ENCODE measurements at regions of chr20 and their contacts with region 1.

Region 1: GRCh38 chr20:63537525-63538203 is 488 bp upstream of the PTK6 start:
- DNase-seq: peak; percentile 97
- ATAC-seq: peak; percentile 85
- H3K4me3 ChIP-seq: peak overlapping the region in 4 of 5 experiments; percentile 55 to 67 (median 58)
- H3K4me3 Mint-ChIP-seq: peak overlapping the region; percentile 86
- H3K27ac ChIP-seq: peak overlapping the region; percentile 83 to 86
- H3K27ac Mint-ChIP-seq: peak overlapping the region; percentile 92
- H3K4me1 ChIP-seq: peaks cover 30 to 45% of the 10 kb centered on the region in 2 donors
- H3K4me1 Mint-ChIP-seq: peaks cover 34% of the 10 kb centered on the region
- H3K27me3 ChIP-seq: no peaks in the 10 kb centered on the region
- H3K27me3 Mint-ChIP-seq: no peaks in the 10 kb centered on the region
- CTCF ChIP-seq: peak; percentile 99

Region 2: DNA sequence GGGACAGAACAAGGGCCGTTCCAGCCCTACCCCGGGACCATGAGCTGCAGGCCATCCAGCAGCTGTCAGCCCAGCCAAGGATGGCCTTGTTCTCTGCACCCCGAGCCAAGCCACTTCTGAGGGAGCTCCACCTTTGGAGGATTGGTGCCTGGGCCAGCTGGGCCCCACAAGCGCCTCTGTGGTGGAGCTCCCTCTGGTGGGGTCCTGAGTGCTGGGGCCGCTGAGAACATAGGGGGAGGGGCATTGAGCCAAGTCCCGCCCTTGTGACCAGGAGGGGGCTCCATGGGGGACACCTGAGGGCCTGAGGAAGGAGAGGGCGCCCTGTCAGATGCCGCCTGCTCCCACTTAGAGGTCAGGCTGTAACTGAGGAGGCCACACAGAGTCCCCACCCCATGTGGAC is 364.9 kb before region 1 on chr20:
- CTCF ChIA-PET with region 1: no interaction called
- POLR2A ChIA-PET with region 1: no interaction called
- intact Hi-C with region 1: no loop called
- DNase-seq: no peak
- ATAC-seq: no peak
- H3K4me3 ChIP-seq: no peak overlapping the region
- H3K4me3 Mint-ChIP-seq: no peak overlapping the region
- H3K27ac ChIP-seq: no peak overlapping the region
- H3K27ac Mint-ChIP-seq: no peak overlapping the region
- H3K4me1 ChIP-seq: peaks cover 13 to 30% of the 10 kb centered on the region in 2 donors
- H3K4me1 Mint-ChIP-seq: peaks cover 7% of the 10 kb centered on the region
- H3K27me3 ChIP-seq: peaks cover 0 to 54% (median 25%) of the 10 kb centered on the region in 4 experiments
- H3K27me3 Mint-ChIP-seq: peaks cover 30% of the 10 kb centered on the region
- CTCF ChIP-seq: no peak

Region 3: GRCh38 chr20:63280929-63281545 is 256.6 kb before region 1 on chr20:
- CTCF ChIA-PET with region 1: no interaction called
- POLR2A ChIA-PET with region 1: no interaction called
- intact Hi-C with region 1: no loop called
- DNase-seq: no peak
- ATAC-seq: no peak
- H3K4me3 ChIP-seq: no peak overlapping the region
- H3K4me3 Mint-ChIP-seq: no peak overlapping the region
- H3K27ac ChIP-seq: no peak overlapping the region
- H3K27ac Mint-ChIP-seq: no peak overlapping the region
- H3K4me1 ChIP-seq: no peaks in the 10 kb centered on the region
- H3K4me1 Mint-ChIP-seq: peaks cover 1% of the 10 kb centered on the region
- H3K27me3 ChIP-seq: no peaks in the 10 kb centered on the region
- H3K27me3 Mint-ChIP-seq: no peaks in the 10 kb centered on the region
- CTCF ChIP-seq: no peak

Region 4: DNA sequence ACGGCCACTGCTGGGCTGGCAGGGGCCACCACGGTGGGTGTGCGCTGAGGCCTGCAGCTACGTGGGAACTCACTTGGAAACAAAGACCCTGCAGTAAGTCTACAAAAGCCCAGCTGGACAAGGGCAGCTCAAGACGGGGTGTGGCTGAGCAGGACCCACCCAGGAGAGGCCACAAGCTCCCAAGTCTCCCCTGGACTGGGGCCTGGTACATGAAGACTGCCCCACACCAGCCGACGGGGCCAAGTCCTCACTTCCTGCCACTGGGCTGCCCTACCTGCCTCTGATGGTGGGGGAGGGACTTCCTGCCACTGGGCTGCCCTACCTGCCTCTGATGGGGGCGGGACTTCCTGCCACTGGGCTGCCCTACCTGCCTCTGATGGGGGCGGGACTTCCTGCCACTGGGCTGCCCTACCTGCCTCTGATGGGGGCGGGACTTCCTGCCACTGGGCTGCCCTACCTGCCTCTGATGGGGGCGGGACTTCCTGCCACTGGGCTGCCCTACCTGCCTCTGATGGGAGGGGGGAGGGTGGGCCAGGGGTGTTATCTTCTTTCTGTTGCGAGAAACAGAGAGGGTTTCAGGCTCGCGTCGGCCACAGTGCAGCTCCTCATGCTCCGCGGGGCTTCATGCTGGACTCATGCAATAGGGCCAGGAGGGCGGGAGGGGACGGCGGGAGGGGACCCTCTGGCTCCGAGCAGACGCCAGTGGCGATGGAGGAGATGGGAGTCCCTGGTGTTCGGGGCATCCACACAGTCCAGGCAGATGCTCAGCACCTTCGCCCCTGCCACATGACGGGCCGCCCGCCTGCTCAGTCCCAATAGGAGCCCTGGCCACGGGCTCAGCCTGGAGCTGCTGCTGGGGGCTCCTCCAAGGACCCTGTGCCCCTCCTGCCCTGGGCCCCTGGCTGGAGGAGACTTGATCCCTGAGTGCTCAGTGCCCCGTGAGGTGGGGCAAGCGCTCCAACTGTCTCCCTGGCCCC is 127.9 kb before region 1 on chr20:
- CTCF ChIA-PET with region 1: no interaction called
- POLR2A ChIA-PET with region 1: no interaction called
- intact Hi-C with region 1: no loop called
- DNase-seq: no peak
- ATAC-seq: no peak
- H3K4me3 ChIP-seq: no peak overlapping the region
- H3K4me3 Mint-ChIP-seq: no peak overlapping the region
- H3K27ac ChIP-seq: no peak overlapping the region
- H3K27ac Mint-ChIP-seq: no peak overlapping the region
- H3K4me1 ChIP-seq: no peaks in the 10 kb centered on the region
- H3K4me1 Mint-ChIP-seq: no peaks in the 10 kb centered on the region
- H3K27me3 ChIP-seq: peaks cover 0 to 3% (median 0%) of the 10 kb centered on the region in 4 experiments
- H3K27me3 Mint-ChIP-seq: peaks cover 3% of the 10 kb centered on the region
- CTCF ChIP-seq: no peak

Region 5: DNA sequence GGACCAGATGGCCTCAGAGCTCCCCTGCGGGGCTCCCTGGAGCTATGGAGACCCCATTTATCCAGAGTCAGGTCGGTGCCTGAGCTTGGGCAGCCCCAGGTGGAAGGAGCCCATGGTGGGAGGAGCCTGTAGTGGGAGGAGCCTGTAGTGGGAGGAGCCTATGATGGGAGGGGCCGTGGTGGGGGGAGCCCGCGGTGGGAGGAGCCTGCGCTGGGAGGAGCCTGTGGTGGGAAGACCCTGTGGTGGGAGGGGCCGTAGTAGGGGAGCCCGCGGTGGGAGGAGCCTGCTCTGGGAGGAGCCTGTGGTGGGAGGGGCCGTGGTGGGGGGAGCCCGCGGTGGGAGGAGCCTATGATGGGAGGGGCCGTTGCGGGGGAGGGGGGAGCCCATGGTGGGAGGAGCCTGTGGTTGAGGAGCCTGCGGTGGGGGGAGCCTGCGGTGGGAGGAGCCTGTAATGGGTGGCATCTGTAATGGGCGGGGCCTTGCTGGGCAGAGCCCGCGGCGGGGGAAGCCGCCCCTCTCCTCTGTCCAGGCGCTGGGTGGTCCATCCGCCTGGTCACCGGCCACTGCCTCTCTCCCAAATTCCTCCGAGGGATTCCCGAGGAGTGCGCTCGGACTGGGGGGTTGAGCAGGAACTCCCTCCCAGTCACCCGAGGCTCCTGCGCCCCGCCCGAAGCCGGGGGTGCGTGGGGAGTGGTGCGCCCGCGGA is 15.7 kb after region 1 on chr20:
- CTCF ChIA-PET with region 1: interaction called, 16 read pairs
- POLR2A ChIA-PET with region 1: interaction called, 11 read pairs
- intact Hi-C with region 1: loop called (anchors 1 kb)
- DNase-seq: peak; percentile 96
- ATAC-seq: peak; percentile 75
- H3K4me3 ChIP-seq: peak overlapping the region; percentile 7 to 89 (median 75)
- H3K4me3 Mint-ChIP-seq: peak overlapping the region; percentile 86
- H3K27ac ChIP-seq: peak overlapping the region; percentile 79 to 88
- H3K27ac Mint-ChIP-seq: peak overlapping the region; percentile 89
- H3K4me1 ChIP-seq: peaks cover 36 to 50% of the 10 kb centered on the region in 2 donors
- H3K4me1 Mint-ChIP-seq: peaks cover 50% of the 10 kb centered on the region
- H3K27me3 ChIP-seq: peaks cover 0 to 5% (median under 1%) of the 10 kb centered on the region in 4 experiments
- H3K27me3 Mint-ChIP-seq: no peaks in the 10 kb centered on the region
- CTCF ChIP-seq: no peak

Region 6: GRCh38 chr20:63580796-63581461 is 43.3 kb after region 1 on chr20:
- CTCF ChIA-PET with region 1: interaction called, 16 read pairs
- POLR2A ChIA-PET with region 1: interaction called, 5 read pairs
- intact Hi-C with region 1: loop called (anchors 1 kb)
- DNase-seq: peak; percentile 81
- ATAC-seq: peak; percentile 93
- H3K4me3 ChIP-seq: no peak overlapping the region
- H3K4me3 Mint-ChIP-seq: no peak overlapping the region
- H3K27ac ChIP-seq: no peak overlapping the region
- H3K27ac Mint-ChIP-seq: peak overlapping the region; percentile 26
- H3K4me1 ChIP-seq: peaks cover 0 to 6% of the 10 kb centered on the region in 2 donors
- H3K4me1 Mint-ChIP-seq: peaks cover 4% of the 10 kb centered on the region
- H3K27me3 ChIP-seq: no peaks in the 10 kb centered on the region
- H3K27me3 Mint-ChIP-seq: no peaks in the 10 kb centered on the region
- CTCF ChIP-seq: peak; percentile 71

Region 7: GRCh38 chr20:63707549-63708300 is 170.1 kb after region 1 on chr20 and contains the starts of genes ARFRP1 and ZGPAT:
- CTCF ChIA-PET with region 1: interaction called, 3 read pairs
- POLR2A ChIA-PET with region 1: interaction called, 6 read pairs
- intact Hi-C with region 1: loop called (anchors 1 kb)
- DNase-seq: peak; percentile 92
- ATAC-seq: peak; percentile 96
- H3K4me3 ChIP-seq: peak within 1 kb of the TSS in 4 of 5 experiments; percentile 63 to 80 (median 67)
- H3K4me3 Mint-ChIP-seq: peak within 1 kb of the TSS; percentile 87
- H3K27ac ChIP-seq: peak within 1 kb of the TSS; percentile 63 to 85
- H3K27ac Mint-ChIP-seq: peak within 1 kb of the TSS; percentile 86
- H3K4me1 ChIP-seq: peaks cover 21 to 28% of the 10 kb centered on the region in 2 donors
- H3K4me1 Mint-ChIP-seq: peaks cover 38% of the 10 kb centered on the region
- H3K27me3 ChIP-seq: no peaks in the 10 kb centered on the region
- H3K27me3 Mint-ChIP-seq: no peaks in the 10 kb centered on the region
- CTCF ChIP-seq: no peak
- total RNA-seq, gene ARFRP1: 73.3 and 75.5 TPM in 2 replicates
- total RNA-seq, gene ZGPAT: 46.1 and 47.5 TPM in 2 replicates

Region 8: GRCh38 chr20:63791497-63792156 is 254.0 kb after region 1 on chr20:
- CTCF ChIA-PET with region 1: interaction called, 13 read pairs
- POLR2A ChIA-PET with region 1: interaction called, 9 read pairs
- intact Hi-C with region 1: loop called (anchors 1 kb)
- DNase-seq: no peak
- ATAC-seq: no peak
- H3K4me3 ChIP-seq: no peak overlapping the region
- H3K4me3 Mint-ChIP-seq: no peak overlapping the region
- H3K27ac ChIP-seq: no peak overlapping the region
- H3K27ac Mint-ChIP-seq: no peak overlapping the region
- H3K4me1 ChIP-seq: peaks cover 0 to 2% of the 10 kb centered on the region in 2 donors
- H3K4me1 Mint-ChIP-seq: peaks cover 12% of the 10 kb centered on the region
- H3K27me3 ChIP-seq: peaks cover 0 to 9% (median 0%) of the 10 kb centered on the region in 4 experiments
- H3K27me3 Mint-ChIP-seq: peaks cover 14% of the 10 kb centered on the region
- CTCF ChIP-seq: no peak

Measured in B cell (primary cell).